HEK293 (cell line): ENCODE measurements at regions of chr1 and their contacts with region 1.

Region 1: DNA sequence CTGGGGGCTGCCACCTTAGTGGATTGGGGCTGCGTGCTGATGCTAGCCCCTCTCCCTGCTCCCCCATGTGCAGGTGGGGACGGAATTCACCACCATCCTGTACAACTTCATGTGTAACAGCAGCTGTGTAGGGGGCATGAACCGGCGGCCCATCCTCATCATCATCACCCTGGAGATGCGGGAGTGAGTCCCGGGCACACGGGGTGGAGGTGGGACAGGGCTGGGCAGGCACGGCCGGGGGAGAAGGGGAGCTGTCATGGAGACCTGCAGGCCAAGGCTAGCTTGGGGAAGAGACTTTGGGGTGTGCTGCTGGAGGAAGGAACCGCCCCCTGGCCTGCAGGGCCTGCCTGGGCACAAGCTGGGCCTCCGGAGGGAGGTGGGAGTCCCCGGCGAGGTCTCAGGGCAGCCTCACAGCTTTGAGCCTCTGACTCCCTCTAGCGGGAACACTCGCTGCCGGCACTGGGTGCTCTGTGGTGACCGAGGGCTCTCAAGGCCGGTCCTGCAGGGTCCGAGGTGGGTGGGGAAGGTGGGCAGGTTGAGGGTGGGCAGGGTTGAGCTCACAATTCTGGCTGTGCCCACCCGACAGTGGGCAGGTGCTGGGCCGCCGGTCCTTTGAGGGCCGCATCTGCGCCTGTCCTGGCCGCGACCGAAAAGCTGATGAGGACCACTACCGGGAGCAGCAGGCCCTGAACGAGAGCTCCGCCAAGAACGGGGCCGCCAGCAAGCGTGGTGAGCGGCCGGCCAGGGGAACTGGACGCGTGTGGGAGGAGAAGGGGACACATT is 25.0 kb upstream of the CCDC27 start:
- H3K4me3 ChIP-seq: no peak overlapping the region
- H3K27ac ChIP-seq: no peak overlapping the region
- H3K4me1 ChIP-seq: no peaks in the 10 kb centered on the region
- CTCF ChIP-seq: peak; percentile 32

Region 2: DNA sequence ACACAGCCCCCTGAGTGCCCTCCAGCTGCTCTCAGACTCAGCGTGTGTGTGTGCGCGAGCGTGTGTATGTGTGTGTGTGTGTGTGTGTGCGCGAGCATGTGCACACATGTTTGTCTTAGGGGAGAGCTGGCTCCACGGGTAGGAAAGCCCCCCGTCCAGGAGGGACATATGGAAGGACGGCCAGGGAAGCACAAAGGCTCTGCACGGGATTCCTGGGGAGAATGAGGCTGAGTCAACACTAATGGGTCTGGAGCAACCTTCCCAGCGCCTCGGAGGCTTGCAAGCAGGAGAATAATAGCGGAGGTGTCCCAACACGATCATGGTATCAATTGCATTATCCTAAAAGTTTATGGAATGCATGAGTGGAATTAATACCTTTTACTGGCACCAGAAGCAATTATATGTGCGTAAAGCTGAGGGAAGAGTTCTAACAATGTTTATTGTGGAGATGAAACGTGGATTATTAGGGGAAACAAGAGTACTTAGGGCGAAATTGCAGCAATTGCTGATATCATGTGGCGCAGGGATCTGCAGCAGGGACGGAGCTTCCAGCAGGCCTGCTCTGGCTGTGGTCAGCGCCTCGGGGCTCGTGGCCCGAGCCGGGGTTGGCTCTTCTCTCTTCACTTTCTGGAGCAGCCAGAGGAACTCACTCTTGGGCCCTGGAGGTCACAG is 15.3 kb before region 1 on chr1:
- CTCF ChIA-PET with region 1: interaction called, 11 read pairs
- POLR2A ChIA-PET with region 1: no interaction called
- H3K4me3 ChIP-seq: no peak overlapping the region
- H3K27ac ChIP-seq: no peak overlapping the region
- H3K4me1 ChIP-seq: no peaks in the 10 kb centered on the region
- CTCF ChIP-seq: no peak